Lower leg skin (tissue), 4 donors: ENCODE measurements at regions of chr17 and their contacts with region 1.

Region 1: DNA sequence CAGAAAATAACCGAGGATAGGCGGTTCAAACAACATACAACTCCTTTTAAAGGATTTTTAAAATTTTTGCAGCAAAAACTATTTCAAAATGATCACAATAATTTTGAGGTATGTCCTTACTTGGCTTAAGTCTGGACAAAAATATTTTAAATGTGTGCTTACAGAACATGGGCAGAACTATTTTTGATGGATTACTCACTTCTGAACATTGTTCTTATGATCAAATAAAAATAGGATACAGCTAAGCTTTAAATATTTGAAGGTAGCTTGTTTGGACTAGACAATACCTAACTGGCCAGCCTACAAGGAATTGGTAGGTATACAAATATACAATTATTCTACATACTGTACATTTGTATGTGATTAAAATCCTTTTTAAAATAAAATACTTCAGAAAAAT is 14.3 kb upstream of the INTS2 start:
- DNase-seq: no peak
- H3K4me3 ChIP-seq: no peak overlapping the region
- CTCF ChIP-seq: no peak
- POLR2A ChIP-seq: no peak

Region 2: DNA sequence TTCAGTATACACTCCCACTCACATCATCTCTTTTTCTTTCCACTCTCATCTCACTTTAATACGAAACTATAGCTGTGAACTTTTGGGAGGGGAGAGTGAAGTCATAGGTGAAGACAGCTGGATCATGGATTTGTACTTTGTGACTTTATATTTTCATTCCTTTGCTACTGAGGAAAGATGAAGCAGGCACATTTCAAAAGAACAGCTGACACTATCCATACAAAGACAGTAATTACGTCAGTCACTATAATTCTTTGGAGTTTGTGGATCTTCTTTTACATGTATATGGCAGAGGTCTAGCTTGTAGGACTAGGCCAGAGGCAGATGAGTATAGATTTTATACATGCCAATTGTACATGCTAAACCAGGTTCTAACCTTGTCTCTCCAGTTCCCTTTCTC is 918.1 kb before region 1 on chr17:
- intact Hi-C with region 1: loop called (anchors 5 kb)
- DNase-seq: no peak
- H3K4me3 ChIP-seq: no peak overlapping the region
- CTCF ChIP-seq: no peak
- POLR2A ChIP-seq: no peak

Region 3: DNA sequence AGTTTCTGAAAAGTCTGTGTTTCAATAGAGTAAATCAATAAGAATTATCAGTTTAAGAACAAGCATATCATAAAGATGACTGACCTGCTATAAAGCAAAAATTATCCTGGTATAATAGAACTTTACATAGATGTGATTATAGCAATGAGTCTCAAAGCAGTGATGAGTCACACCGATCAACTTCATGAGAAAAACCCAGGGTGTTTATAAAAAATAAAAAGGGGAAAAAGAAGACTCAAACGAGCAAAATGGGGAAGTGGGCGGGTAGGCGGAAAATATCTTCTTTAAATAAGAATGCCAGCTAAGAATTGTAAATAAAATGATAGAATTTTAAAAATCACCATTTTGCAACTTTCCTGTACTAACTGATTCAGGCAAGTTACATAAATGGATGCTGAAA is 125.5 kb before region 1 on chr17:
- intact Hi-C with region 1: no loop called
- DNase-seq: no peak
- H3K4me3 ChIP-seq: no peak overlapping the region
- CTCF ChIP-seq: no peak
- POLR2A ChIP-seq: no peak

Region 4: GRCh38 chr17:61927200-61928165 is 14.6 kb before region 1 on chr17 and contains the start of gene INTS2:
- intact Hi-C with region 1: loop called (anchors 1 kb)
- DNase-seq: peak; percentile 94 to 99
- H3K4me3 ChIP-seq: peak within 1 kb of the TSS; percentile 64
- CTCF ChIP-seq: no peak
- POLR2A ChIP-seq: no peak
- total RNA-seq, gene INTS2: 6.8 to 11.4 (median 9.2) TPM